ENCODE measurements at regions of chr2 and their contacts with region 1.

Region 1: GRCh38 chr2:74715078-74715791 is 61.2 kb downstream of the SEMA4F start:
- DNase-seq: peak; percentile 81 to 89 (median 87)
- H3K4me3 ChIP-seq: peak overlapping the region; percentile 55
- H3K27ac ChIP-seq: peak overlapping the region; percentile 75 to 79
- H3K4me1 ChIP-seq: no peaks in the 10 kb centered on the region
- H3K27me3 ChIP-seq: no peaks in the 10 kb centered on the region
- CTCF ChIP-seq: peak; percentile 83 to 92 (median 88)
- EP300 ChIP-seq: no peak
- POLR2A ChIP-seq: peak; percentile 15

Region 2: GRCh38 chr2:74778381-74779264 is 63.4 kb after region 1 on chr2:
- intact Hi-C with region 1: no loop called
- DNase-seq: peak in 1 of 5 donors; percentile 35
- H3K4me3 ChIP-seq: no peak overlapping the region
- H3K27ac ChIP-seq: no peak overlapping the region
- H3K4me1 ChIP-seq: no peaks in the 10 kb centered on the region
- H3K27me3 ChIP-seq: no peaks in the 10 kb centered on the region
- CTCF ChIP-seq: no peak
- EP300 ChIP-seq: no peak
- POLR2A ChIP-seq: no peak

Region 3: GRCh38 chr2:74833418-74834233 is 118.4 kb after region 1 on chr2 and contains the start of gene HK2:
- intact Hi-C with region 1: loop called in 1 of 4 experiments (anchors 5 kb)
- DNase-seq: peak; percentile 87 to 92 (median 89)
- H3K4me3 ChIP-seq: peak within 1 kb of the TSS; percentile 65
- H3K27ac ChIP-seq: peak within 1 kb of the TSS; percentile 21 to 70
- H3K4me1 ChIP-seq: peaks cover 5% of the 10 kb centered on the region
- H3K27me3 ChIP-seq: no peaks in the 10 kb centered on the region
- CTCF ChIP-seq: no peak
- EP300 ChIP-seq: no peak
- POLR2A ChIP-seq: peak; percentile 47
- total RNA-seq, gene HK2: 11.8 to 39.4 (median 28.9) TPM

Region 4: GRCh38 chr2:75221862-75222261 is 506.6 kb after region 1 on chr2:
- intact Hi-C with region 1: no loop called
- DNase-seq: no peak
- H3K4me3 ChIP-seq: no peak overlapping the region
- H3K27ac ChIP-seq: no peak overlapping the region
- H3K4me1 ChIP-seq: no peaks in the 10 kb centered on the region
- H3K27me3 ChIP-seq: no peaks in the 10 kb centered on the region
- CTCF ChIP-seq: no peak
- EP300 ChIP-seq: no peak
- POLR2A ChIP-seq: no peak